ENCODE measurements at regions of chr11 and their contacts with region 1.

Region 1: DNA sequence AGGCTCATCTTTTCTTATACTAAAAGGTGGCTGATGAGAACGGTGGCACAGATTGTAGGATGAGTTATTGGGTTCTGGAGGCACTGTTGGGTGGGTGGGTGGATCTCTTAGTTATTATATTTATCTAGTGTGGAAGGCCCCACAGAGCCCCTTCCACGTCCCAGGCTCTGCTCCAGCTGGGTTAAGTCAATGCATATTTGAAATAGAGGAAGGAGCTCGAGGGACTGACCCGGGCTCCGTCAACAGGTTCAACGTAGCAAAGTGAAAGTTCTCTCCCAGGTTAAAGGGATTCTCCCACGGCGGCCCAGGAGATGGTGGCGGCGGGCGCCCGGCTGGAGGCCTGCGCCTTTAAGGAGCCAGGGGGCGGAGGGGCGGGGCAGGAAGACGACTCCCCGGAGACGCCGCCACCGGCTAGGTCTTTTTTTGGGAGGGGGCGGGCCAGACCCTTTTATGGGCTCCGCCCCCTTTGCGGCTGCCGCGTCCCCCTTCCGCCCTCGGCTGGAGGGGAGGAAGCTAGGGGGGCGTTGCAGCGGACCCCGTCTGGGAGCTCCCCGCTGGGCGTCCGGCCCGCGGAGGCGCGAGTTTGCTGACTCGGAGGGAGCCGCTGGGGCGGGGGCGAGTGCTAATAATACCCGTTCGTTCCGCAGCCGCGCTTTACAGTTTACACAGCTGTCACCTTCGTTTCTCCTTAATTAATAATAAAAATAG is 1.5 kb upstream of the INPPL1 start:
- DNase-seq: peak; percentile 81 to 97 (median 90)
- ATAC-seq: peak; percentile 89
- H3K4me3 ChIP-seq: peak overlapping the region; percentile 77
- H3K4me3 Mint-ChIP-seq: peak overlapping the region; percentile 88 to 99 (median 91)
- H3K27ac ChIP-seq: peak overlapping the region; percentile 88
- H3K27ac Mint-ChIP-seq: peak overlapping the region; percentile 76 to 95 (median 89)
- H3K4me1 ChIP-seq: peaks cover 10 to 12% of the 10 kb centered on the region in 2 donors
- H3K4me1 Mint-ChIP-seq: peaks cover 12 to 31% (median 24%) of the 10 kb centered on the region in 7 donors
- H3K27me3 ChIP-seq: no peaks in the 10 kb centered on the region
- H3K27me3 Mint-ChIP-seq: peaks cover 0 to 8% (median 5%) of the 10 kb centered on the region in 5 donors

Region 2: DNA sequence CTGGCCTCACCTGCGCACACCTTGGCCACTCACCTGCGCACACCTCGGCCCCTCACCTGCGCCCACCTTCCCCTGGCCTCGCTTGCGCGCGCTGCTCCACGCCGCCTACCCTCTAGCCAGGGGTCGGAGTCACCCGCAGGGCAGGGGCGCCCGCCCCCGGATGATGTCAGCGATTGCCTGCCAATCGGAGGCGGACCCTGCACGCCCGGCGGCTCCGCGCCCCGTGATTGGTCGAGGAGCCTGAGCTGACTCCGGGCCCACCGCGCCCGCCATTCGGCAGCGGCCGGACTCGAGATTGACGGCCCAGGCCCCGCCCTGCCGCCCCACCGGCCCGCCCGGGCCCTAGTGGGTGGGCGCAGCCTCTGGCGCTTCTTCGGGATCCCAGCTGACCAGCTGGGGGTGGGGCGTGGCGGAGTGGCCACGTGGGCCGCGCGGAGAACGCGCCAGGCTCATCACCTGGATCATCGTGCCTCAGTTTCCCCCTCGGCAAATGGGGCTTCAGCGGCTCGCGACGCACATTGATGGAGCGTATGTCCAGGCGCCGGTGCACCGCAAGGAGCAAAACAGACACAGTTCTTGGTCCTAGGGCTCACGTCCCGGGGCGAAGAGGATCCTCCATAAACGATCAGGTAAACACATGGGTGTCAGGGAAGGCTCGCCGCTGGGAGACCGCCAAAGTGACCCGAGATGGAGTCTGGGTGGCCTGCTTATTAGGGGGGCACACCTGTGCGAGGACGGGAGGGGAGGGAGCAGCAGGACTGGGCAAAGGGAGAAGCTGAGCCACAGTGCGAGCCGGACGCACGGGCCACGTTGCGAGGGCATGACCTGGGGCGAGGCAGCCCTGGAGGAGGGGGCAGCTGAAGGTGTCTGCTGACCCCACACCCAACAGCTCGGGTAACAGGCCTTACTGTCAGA is 774.5 kb before region 1 on chr11 and contains the start of gene DHCR7:
- CTCF ChIA-PET with region 1: no interaction called
- POLR2A ChIA-PET with region 1: no interaction called
- intact Hi-C with region 1: loop called in 1 of 2 experiments (anchors 5 kb)
- DNase-seq: peak; percentile 81 to 96 (median 88)
- ATAC-seq: peak; percentile 85
- H3K4me3 ChIP-seq: peak within 1 kb of the TSS; percentile 86
- H3K4me3 Mint-ChIP-seq: peak within 1 kb of the TSS; percentile 89 to 98 (median 94)
- H3K27ac ChIP-seq: peak within 1 kb of the TSS; percentile 92
- H3K27ac Mint-ChIP-seq: peak within 1 kb of the TSS; percentile 88 to 99 (median 95)
- H3K4me1 ChIP-seq: peaks cover 27 to 37% of the 10 kb centered on the region in 2 donors
- H3K4me1 Mint-ChIP-seq: peaks cover 27 to 58% (median 49%) of the 10 kb centered on the region in 7 donors
- H3K27me3 ChIP-seq: no peaks in the 10 kb centered on the region
- H3K27me3 Mint-ChIP-seq: no peaks in the 10 kb centered on the region
- total RNA-seq, gene DHCR7: 14.7 to 46.1 (median 19.6) TPM

Region 3: DNA sequence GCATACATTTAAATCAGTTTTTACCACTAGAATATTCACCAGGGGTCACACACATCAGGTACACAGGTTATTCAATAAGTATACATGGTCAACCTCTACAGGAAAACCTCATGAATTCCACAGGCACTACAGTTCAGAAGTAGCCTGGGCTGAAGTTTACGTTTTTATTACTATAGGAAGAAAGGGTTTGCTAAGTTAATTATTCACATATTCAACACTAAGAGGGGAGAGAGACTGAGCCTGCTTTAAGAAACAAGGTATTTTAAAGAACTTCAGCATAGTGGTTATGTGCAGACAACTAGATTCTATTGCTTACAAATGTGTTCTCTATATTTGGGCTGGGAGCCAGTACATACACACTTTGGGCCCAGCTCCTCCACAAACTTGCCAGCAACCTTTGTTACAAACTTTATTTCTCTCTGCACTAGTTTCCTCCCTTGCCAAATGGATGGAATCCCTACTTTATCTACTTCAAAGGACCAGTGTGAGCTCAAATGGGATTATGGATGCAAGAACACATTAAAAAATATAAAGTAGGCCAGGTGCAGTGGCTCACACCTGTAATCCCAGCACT is 192.5 kb before region 1 on chr11:
- CTCF ChIA-PET with region 1: no interaction called
- POLR2A ChIA-PET with region 1: no interaction called
- intact Hi-C with region 1: loop called in 1 of 2 experiments (anchors 5 kb)
- DNase-seq: no peak
- ATAC-seq: no peak
- H3K4me3 ChIP-seq: no peak overlapping the region
- H3K4me3 Mint-ChIP-seq: peak overlapping the region in 8 of 10 donors; percentile 18 to 57 (median 34)
- H3K27ac ChIP-seq: peak overlapping the region; percentile 65
- H3K27ac Mint-ChIP-seq: peak overlapping the region in 8 of 9 donors; percentile 45 to 92 (median 70)
- H3K4me1 ChIP-seq: peaks cover 9 to 28% of the 10 kb centered on the region in 2 donors
- H3K4me1 Mint-ChIP-seq: peaks cover 25 to 80% (median 72%) of the 10 kb centered on the region in 7 donors
- H3K27me3 ChIP-seq: no peaks in the 10 kb centered on the region
- H3K27me3 Mint-ChIP-seq: no peaks in the 10 kb centered on the region

Region 4: DNA sequence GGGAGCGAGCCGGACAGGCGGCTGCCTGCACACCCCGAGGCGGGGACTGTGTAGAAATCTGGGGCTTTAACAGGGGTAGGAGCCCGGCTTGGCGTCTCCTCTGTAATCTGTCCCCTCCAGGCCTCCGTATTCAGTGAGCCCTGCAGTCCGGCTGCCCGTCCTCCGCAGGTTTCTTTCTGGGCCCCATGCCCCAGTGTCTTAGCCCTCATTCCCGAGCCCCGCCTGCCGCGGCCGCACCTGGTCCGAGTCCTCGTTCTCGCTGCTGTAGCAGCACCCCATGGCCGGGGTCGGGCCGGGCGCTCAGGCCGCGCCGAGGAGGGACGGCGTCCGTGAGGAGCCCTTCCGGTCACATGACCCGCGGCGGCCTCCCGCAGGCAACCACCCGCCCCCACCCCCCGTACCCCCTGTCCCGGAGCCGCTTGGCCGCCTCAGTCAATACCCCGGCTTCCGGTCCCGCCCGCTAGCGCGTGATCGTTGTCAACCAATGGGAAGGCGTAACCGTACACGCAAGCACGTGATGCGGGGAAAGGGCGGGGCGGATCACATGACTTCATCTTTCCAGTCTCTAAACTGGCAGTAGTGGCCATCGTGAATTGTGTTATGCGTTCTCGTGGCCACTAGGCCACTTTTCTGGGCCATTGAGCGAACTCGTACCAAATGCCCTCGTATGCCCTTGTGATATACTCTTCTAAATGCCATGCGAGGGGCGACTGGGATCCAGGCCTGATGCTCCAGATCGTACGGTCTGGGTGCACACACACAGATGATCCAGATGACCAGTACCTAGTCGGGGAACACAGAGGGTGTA is 119.9 kb before region 1 on chr11 and contains the start of gene LAMTOR1:
- CTCF ChIA-PET with region 1: no interaction called
- POLR2A ChIA-PET with region 1: interaction called, 4 read pairs
- intact Hi-C with region 1: loop called in 1 of 2 experiments (anchors 2 kb)
- DNase-seq: peak; percentile 87 to 98 (median 95)
- ATAC-seq: peak; percentile 98
- H3K4me3 ChIP-seq: peak within 1 kb of the TSS; percentile 54
- H3K4me3 Mint-ChIP-seq: peak within 1 kb of the TSS; percentile 66 to 97 (median 86)
- H3K27ac ChIP-seq: peak within 1 kb of the TSS; percentile 93
- H3K27ac Mint-ChIP-seq: peak within 1 kb of the TSS; percentile 83 to 98 (median 94)
- H3K4me1 ChIP-seq: peaks cover 20% of the 10 kb centered on the region in 2 donors
- H3K4me1 Mint-ChIP-seq: peaks cover 37 to 49% (median 44%) of the 10 kb centered on the region in 7 donors
- H3K27me3 ChIP-seq: no peaks in the 10 kb centered on the region
- H3K27me3 Mint-ChIP-seq: no peaks in the 10 kb centered on the region
- total RNA-seq, gene LAMTOR1: 41.8 to 83.0 (median 69.7) TPM

Region 5: GRCh38 chr11:72238040-72238450 is 15.0 kb after region 1 on chr11:
- CTCF ChIA-PET with region 1: interaction called, 3 read pairs
- POLR2A ChIA-PET with region 1: interaction called, 6 read pairs
- intact Hi-C with region 1: loop called (anchors 1 kb)
- DNase-seq: peak in 7 of 9 donors; percentile 25 to 47 (median 32)
- ATAC-seq: peak; percentile 69
- H3K4me3 ChIP-seq: no peak overlapping the region
- H3K4me3 Mint-ChIP-seq: peak overlapping the region in 1 of 10 donors; percentile 1
- H3K27ac ChIP-seq: no peak overlapping the region
- H3K27ac Mint-ChIP-seq: no peak overlapping the region
- H3K4me1 ChIP-seq: peaks cover 0 to 15% of the 10 kb centered on the region in 2 donors
- H3K4me1 Mint-ChIP-seq: peaks cover 11 to 33% (median 27%) of the 10 kb centered on the region in 7 donors
- H3K27me3 ChIP-seq: peaks cover 0 to 21% of the 10 kb centered on the region in 2 donors
- H3K27me3 Mint-ChIP-seq: peaks cover 26 to 39% (median 35%) of the 10 kb centered on the region in 5 donors

Region 6: GRCh38 chr11:73141848-73142286 is 918.8 kb after region 1 on chr11:
- CTCF ChIA-PET with region 1: no interaction called
- POLR2A ChIA-PET with region 1: no interaction called
- intact Hi-C with region 1: loop called in 1 of 2 experiments (anchors 2 kb)
- DNase-seq: peak in 4 of 9 donors; percentile 38 to 64 (median 50)
- ATAC-seq: peak; percentile 42
- H3K4me3 ChIP-seq: peak overlapping the region; percentile 87
- H3K4me3 Mint-ChIP-seq: peak overlapping the region; percentile 83 to 97 (median 94)
- H3K27ac ChIP-seq: peak overlapping the region; percentile 99
- H3K27ac Mint-ChIP-seq: peak overlapping the region; percentile 82 to 98 (median 91)
- H3K4me1 ChIP-seq: peaks cover 25 to 26% of the 10 kb centered on the region in 2 donors
- H3K4me1 Mint-ChIP-seq: peaks cover 22 to 58% (median 51%) of the 10 kb centered on the region in 7 donors
- H3K27me3 ChIP-seq: no peaks in the 10 kb centered on the region
- H3K27me3 Mint-ChIP-seq: no peaks in the 10 kb centered on the region

Measured in naive thymus-derived CD4-positive, alpha-beta T cell (primary cell).